HepG2 (cell line): ENCODE measurements at regions of chr6 and their contacts with region 1.

Region 1: GRCh38 chr6:138115877-138116660 is 8.8 kb upstream of the PERP start:
- DNase-seq: peak; percentile 71
- ATAC-seq: peak; percentile 96
- H3K4me3 ChIP-seq: 0 out of 6 replicates have a peak overlapping the region, but pooled peaks of 1 of the 3 experiments have one; percentile 2
- H3K27ac ChIP-seq: peak overlapping the region; percentile 13
- H3K4me1 ChIP-seq: peaks cover 18% of the 10 kb centered on the region
- H3K27me3 ChIP-seq: no peaks in the 10 kb centered on the region
- CTCF ChIP-seq: peak; percentile 90
- EP300 ChIP-seq: no peak
- POLR2A ChIP-seq: no peak
- RAD21 ChIP-seq: peak; percentile 92

Region 2: GRCh38 chr6:138001750-138002349 is 114.2 kb before region 1 on chr6:
- CTCF ChIA-PET with region 1: interaction called, 182 read pairs
- POLR2A ChIA-PET with region 1: no interaction called
- in situ Hi-C with region 1: loop called (anchors 5 kb)
- intact Hi-C with region 1: no loop called
- DNase-seq: peak; percentile 44
- ATAC-seq: peak; percentile 51
- H3K4me3 ChIP-seq: no peak overlapping the region
- H3K27ac ChIP-seq: no peak overlapping the region
- H3K4me1 ChIP-seq: 0 out of 2 replicates have a peak, but pooled peaks cover 6% of the 10 kb centered on the region
- H3K27me3 ChIP-seq: no peaks in the 10 kb centered on the region
- CTCF ChIP-seq: peak; percentile 88
- EP300 ChIP-seq: no peak
- POLR2A ChIP-seq: no peak
- RAD21 ChIP-seq: peak; percentile 87

Region 3: GRCh38 chr6:138129190-138129589 is 13.1 kb after region 1 on chr6:
- CTCF ChIA-PET with region 1: no interaction called
- POLR2A ChIA-PET with region 1: no interaction called
- in situ Hi-C with region 1: no loop called
- intact Hi-C with region 1: no loop called
- DNase-seq: peak; percentile 27
- ATAC-seq: peak; percentile 98
- H3K4me3 ChIP-seq: no peak overlapping the region
- H3K27ac ChIP-seq: no peak overlapping the region
- H3K4me1 ChIP-seq: no peaks in the 10 kb centered on the region
- H3K27me3 ChIP-seq: no peaks in the 10 kb centered on the region
- CTCF ChIP-seq: peak; percentile 69
- EP300 ChIP-seq: no peak
- POLR2A ChIP-seq: no peak
- RAD21 ChIP-seq: peak; percentile 42; the same call in 1 of the 2 replicates

Region 4: DNA sequence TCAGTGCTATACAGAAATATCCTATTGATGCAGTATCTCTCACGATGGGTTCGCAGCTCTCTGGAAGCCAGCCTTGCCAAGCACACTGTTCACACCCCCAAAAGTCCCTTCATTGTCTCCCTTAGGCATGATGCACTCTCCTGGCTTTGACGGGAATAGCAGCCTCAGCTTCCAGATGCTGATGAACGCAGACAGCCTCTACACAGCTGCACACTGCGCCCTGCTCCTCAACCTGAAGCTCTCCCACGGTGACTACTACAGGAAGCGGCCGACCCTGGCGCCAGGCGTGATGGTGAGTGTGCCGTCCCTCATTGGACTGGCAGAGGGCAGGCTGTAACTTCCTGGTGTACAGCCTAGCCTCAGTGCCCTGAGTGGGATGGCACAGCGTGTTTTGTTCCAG is 162.3 kb after region 1 on chr6:
- CTCF ChIA-PET with region 1: interaction called, 51 read pairs
- POLR2A ChIA-PET with region 1: no interaction called
- in situ Hi-C with region 1: no loop called
- intact Hi-C with region 1: loop called (anchors 1 kb)
- DNase-seq: peak; percentile 64
- ATAC-seq: peak; percentile 97
- H3K4me3 ChIP-seq: no peak overlapping the region
- H3K27ac ChIP-seq: no peak overlapping the region
- H3K4me1 ChIP-seq: no peaks in the 10 kb centered on the region
- H3K27me3 ChIP-seq: no peaks in the 10 kb centered on the region
- CTCF ChIP-seq: peak; percentile 87
- EP300 ChIP-seq: no peak
- POLR2A ChIP-seq: no peak
- RAD21 ChIP-seq: peak; percentile 72; the same call in 1 of the 2 replicates

Region 5: DNA sequence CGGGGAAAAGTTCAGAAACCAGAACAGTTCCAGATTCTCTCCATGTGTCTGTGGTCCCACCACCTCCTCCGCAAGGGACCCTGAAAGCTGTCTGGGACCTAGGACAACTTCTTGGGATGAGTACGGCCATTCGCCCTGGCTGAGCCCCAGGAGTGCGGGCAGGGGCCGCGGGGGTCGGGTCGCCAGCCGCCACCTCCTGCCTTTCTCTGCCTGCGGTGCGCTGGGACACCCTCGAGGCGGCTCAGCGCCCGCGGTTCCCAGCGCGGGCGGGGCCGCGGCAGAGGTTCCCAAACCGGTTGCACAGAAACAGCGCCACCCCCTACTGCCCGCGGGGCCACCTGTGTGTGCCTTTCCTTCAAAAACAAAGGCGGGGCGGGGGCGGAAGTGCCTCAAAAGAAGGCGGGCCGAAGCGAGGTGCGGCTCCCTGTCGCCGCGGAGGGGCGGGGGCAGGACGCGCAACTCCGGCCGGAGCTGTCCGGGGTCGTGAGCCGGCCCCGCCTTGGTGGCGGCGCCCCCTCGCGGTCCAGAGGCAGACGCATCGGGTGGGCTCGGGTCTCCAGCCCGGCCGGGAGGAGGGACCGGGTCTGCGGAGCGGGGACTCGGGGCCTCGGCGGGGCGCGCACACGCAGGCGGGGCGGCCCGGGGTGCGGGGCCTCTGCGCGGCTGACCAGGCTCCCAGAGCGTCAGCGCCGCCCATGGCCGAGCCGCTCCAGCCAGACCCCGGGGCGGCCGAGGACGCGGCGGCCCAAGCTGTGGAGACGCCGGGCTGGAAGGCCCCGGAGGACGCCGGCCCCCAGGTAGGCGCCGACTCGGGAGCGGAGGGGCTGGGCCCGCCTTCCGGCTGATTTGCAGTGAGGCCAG is 288.0 kb after region 1 on chr6 and contains the start of gene HEBP2:
- CTCF ChIA-PET with region 1: interaction called, 10 read pairs
- POLR2A ChIA-PET with region 1: no interaction called
- in situ Hi-C with region 1: loop called (anchors 10 kb)
- intact Hi-C with region 1: no loop called
- DNase-seq: peak; percentile 96
- ATAC-seq: peak; percentile 90
- H3K4me3 ChIP-seq: peak within 1 kb of the TSS; percentile 73 to 89 (median 84)
- H3K27ac ChIP-seq: peak within 1 kb of the TSS; percentile 55
- H3K4me1 ChIP-seq: peaks cover 19% of the 10 kb centered on the region
- H3K27me3 ChIP-seq: no peaks in the 10 kb centered on the region; a peak in 2 of 5 replicates
- CTCF ChIP-seq: peak; percentile 86
- EP300 ChIP-seq: peak; percentile 28 to 58; a peak in 3 of 4 replicates
- POLR2A ChIP-seq: peak; percentile 27 to 75; a peak in 3 of 4 replicates
- RAD21 ChIP-seq: peak; percentile 97
- total RNA-seq, gene HEBP2: 63.5 and 72.8 TPM in 2 replicates

Region 6: DNA sequence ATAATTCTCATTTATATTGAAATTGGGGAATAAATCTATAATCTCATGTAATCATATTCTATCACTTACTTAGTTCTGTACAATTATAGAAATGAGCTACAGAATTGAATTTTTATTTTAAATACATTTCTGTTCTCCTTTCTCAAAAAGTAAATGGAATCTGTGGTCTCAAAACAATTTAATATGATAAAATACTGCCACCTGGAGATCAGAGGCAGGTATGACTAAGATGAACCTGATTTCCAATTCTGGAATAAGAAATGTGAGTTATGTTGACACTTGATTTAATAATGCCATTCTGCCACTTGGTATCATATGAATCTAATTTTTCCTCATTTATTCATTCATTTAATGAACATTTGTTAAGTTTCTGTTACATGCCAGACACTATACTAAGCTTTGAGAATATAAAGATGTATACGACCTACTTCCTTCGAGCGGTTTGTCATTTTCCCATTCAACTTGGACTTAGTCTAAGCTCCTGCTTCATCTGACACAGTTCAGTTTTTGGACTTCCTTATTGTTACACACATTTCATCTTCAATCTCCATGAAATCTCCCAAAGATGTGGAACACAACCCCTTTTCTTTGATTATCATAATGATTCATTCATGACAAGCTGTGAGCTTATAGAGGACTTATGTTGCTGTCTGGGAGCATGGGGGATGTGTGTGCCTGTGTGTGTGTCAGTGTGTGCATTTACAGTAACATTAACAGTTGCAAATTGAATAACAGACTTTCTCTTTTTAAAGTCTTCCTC is 650.0 kb after region 1 on chr6:
- CTCF ChIA-PET with region 1: interaction called, 5 read pairs
- POLR2A ChIA-PET with region 1: no interaction called
- in situ Hi-C with region 1: loop called (anchors 10 kb)
- intact Hi-C with region 1: loop called (anchors 5 kb)
- DNase-seq: peak; percentile 48
- ATAC-seq: no peak
- H3K4me3 ChIP-seq: no peak overlapping the region
- H3K27ac ChIP-seq: no peak overlapping the region
- H3K4me1 ChIP-seq: peaks cover 3% of the 10 kb centered on the region
- H3K27me3 ChIP-seq: no peaks in the 10 kb centered on the region
- CTCF ChIP-seq: peak; percentile 73
- EP300 ChIP-seq: no peak
- POLR2A ChIP-seq: no peak
- RAD21 ChIP-seq: peak; percentile 66; the same call in 1 of the 2 replicates